Naive thymus-derived CD8-positive, alpha-beta T cell (primary cell): ENCODE measurements at regions of chr3 and their contacts with region 1.

Region 1: DNA sequence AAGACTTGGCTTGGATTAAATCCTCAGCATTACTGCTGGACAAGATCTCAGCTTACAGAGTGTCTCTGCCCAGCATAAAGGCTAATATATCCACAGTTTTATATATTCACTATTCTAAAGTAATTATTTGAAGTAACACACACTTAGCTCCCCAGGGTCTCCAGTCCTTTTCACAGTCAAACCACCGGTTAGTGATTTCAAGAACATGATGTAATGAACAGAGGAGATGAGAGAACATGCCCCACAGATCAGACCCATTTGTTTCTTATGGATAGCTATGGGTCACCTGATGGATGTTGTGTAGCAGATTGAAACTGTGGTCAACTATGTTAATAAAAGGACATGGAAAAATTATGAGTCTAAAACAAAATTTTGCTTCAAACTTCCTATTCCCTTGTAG is 44.8 kb upstream of the MRPL3 start:
- DNase-seq: no peak
- ATAC-seq: no peak
- H3K4me3 Mint-ChIP-seq: no peak overlapping the region
- H3K27ac Mint-ChIP-seq: no peak overlapping the region
- H3K4me1 Mint-ChIP-seq: no peaks in the 10 kb centered on the region
- H3K27me3 Mint-ChIP-seq: peaks cover 16 to 36% (median 23%) of the 10 kb centered on the region in 5 donors

Region 2: GRCh38 chr3:131494706-131495105 is 52.9 kb before region 1 on chr3:
- POLR2A ChIA-PET with region 1: no interaction called
- DNase-seq: no peak
- ATAC-seq: no peak
- H3K4me3 Mint-ChIP-seq: no peak overlapping the region
- H3K27ac Mint-ChIP-seq: no peak overlapping the region
- H3K4me1 Mint-ChIP-seq: peaks cover 5 to 32% (median 20%) of the 10 kb centered on the region in 4 donors
- H3K27me3 Mint-ChIP-seq: no peaks in the 10 kb centered on the region

Region 3: GRCh38 chr3:131526801-131527347 is 20.7 kb before region 1 on chr3:
- POLR2A ChIA-PET with region 1: no interaction called
- DNase-seq: no peak
- ATAC-seq: no peak
- H3K4me3 Mint-ChIP-seq: no peak overlapping the region
- H3K27ac Mint-ChIP-seq: no peak overlapping the region
- H3K4me1 Mint-ChIP-seq: peaks cover 0 to 2% (median under 1%) of the 10 kb centered on the region in 4 donors
- H3K27me3 Mint-ChIP-seq: peaks cover 22 to 50% (median 35%) of the 10 kb centered on the region in 5 donors

Region 4: GRCh38 chr3:132020058-132020457 is 472.5 kb after region 1 on chr3:
- POLR2A ChIA-PET with region 1: interaction called, 10 read pairs
- DNase-seq: no peak
- ATAC-seq: no peak
- H3K4me3 Mint-ChIP-seq: no peak overlapping the region
- H3K27ac Mint-ChIP-seq: peak overlapping the region in 1 of 10 donors; percentile 35
- H3K4me1 Mint-ChIP-seq: no peaks in the 10 kb centered on the region
- H3K27me3 Mint-ChIP-seq: peaks cover 9 to 25% (median 13%) of the 10 kb centered on the region in 5 donors